Activated naive CD4-positive, alpha-beta T cell treated with anti-CD3 and anti-CD28 coated beads for 36 hours (primary cell): ENCODE measurements at regions of chr2 and their contacts with region 1.

Region 1: GRCh38 chr2:191691016-191691735 is 13.2 kb downstream of the NABP1 start:
- DNase-seq: peak; percentile 73
- H3K4me3 Mint-ChIP-seq: no peak overlapping the region
- H3K27ac Mint-ChIP-seq: peak overlapping the region; percentile 72
- H3K4me1 Mint-ChIP-seq: peaks cover 66% of the 10 kb centered on the region
- H3K27me3 Mint-ChIP-seq: no peaks in the 10 kb centered on the region

Region 2: GRCh38 chr2:191642541-191642940 is 48.6 kb before region 1 on chr2:
- CTCF ChIA-PET with region 1: interaction called, 3 read pairs
- intact Hi-C with region 1: loop called (anchors 1 kb)
- DNase-seq: no peak
- H3K4me3 Mint-ChIP-seq: no peak overlapping the region
- H3K27ac Mint-ChIP-seq: peak overlapping the region; percentile 54
- H3K4me1 Mint-ChIP-seq: peaks cover 34% of the 10 kb centered on the region
- H3K27me3 Mint-ChIP-seq: no peaks in the 10 kb centered on the region

Region 3: GRCh38 chr2:191701696-191702095 is 10.5 kb after region 1 on chr2:
- CTCF ChIA-PET with region 1: interaction called, 10 read pairs
- intact Hi-C with region 1: no loop called
- DNase-seq: no peak
- H3K4me3 Mint-ChIP-seq: no peak overlapping the region
- H3K27ac Mint-ChIP-seq: no peak overlapping the region
- H3K4me1 Mint-ChIP-seq: no peaks in the 10 kb centered on the region
- H3K27me3 Mint-ChIP-seq: no peaks in the 10 kb centered on the region